Aorta (tissue), 5 donors: ENCODE measurements at regions of chr1 and their contacts with region 1.

Region 1: DNA sequence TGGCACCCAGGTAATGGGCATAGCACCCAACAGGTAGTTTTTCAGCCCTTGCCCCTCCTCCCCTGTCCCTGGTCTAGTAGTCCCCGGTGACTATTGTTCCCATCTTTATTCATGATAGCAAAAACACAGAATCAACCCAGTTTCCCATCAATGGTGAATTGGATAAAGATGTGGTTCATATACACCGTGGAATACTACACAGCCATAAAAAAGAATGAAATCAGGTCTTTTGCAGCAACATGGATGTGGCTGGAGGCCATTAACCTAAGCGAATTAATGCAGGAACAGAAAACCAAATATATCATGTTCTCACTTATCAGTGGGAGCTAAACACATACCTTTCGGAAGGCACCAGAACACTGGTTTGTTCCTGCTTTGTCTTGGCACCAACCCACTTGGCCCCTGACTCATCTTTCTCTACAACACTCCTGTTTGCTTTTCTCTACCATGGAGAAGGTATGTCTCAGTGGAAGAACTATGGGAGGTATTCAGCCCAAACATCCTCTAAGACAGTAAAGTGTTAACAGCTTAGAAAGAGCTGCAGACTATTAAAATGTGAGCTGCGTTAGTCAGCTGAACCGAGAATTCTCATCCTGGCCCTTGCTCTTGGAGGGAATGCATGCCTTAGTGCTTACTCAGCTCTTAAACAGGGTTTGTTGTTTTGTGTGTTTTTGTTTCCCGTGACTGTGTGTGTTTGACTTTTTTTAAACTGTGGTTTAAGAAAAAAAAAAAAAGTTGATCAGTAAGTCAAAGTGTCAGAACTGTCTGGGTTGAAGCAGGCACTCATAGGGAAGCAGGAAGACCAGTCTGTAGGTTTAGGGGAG is 203.0 kb downstream of the TOMM20 start:
- DNase-seq: no peak
- ATAC-seq: peak; percentile 86
- H3K4me3 ChIP-seq: no peak overlapping the region
- H3K27ac ChIP-seq: peak overlapping the region; percentile 48 to 78
- H3K4me1 ChIP-seq: peaks cover 0 to 2% of the 10 kb centered on the region in 2 donors
- H3K27me3 ChIP-seq: no peaks in the 10 kb centered on the region

Region 2: DNA sequence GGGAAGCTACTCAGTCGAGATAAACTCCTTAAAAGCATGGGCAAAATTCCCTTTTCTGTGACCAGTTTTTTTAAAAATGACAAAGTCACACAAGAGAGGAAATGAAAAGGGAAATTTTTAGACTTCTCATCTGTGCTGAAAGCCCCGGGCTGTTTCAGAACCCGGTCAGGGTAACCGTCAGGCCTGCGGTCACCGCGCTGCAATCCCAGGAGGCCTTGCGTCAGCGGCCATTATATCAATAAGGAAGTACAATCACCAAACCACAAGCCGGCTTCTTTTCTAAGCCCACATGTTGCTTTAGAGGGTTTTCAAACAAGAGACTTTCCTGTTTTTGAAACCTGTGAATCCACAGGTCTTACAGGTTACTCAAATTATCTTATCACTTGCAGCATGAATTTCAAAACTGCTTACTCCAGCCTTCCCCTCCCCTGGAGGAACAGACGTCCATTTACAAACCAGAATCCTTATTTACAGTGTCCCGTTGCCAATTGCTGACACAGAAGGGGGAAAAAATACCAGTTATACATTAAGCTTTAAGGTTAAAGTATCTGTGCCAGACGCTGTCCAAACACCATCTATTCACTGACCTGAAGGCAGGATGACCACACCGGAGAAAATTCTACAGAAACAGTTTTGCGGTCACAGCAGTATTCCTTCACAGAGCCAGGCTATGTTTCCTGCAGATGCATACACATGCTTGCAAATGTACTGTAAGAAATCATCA is 37.7 kb after region 1 on chr1:
- intact Hi-C with region 1: loop called in 1 of 2 experiments (anchors 5 kb)
- DNase-seq: peak; percentile 90 to 94
- ATAC-seq: peak; percentile 72
- H3K4me3 ChIP-seq: no peak overlapping the region
- H3K27ac ChIP-seq: peak overlapping the region; percentile 55 to 67
- H3K4me1 ChIP-seq: peaks cover 3 to 5% of the 10 kb centered on the region in 2 donors
- H3K27me3 ChIP-seq: no peaks in the 10 kb centered on the region

Region 3: GRCh38 chr1:235067263-235068172 is 141.9 kb after region 1 on chr1:
- intact Hi-C with region 1: loop called in 1 of 2 experiments (anchors 5 kb)
- DNase-seq: peak; percentile 92 to 95
- ATAC-seq: peak; percentile 82
- H3K4me3 ChIP-seq: no peak overlapping the region
- H3K27ac ChIP-seq: peak overlapping the region; percentile 16 to 89
- H3K4me1 ChIP-seq: peaks cover 0 to 2% of the 10 kb centered on the region in 2 donors
- H3K27me3 ChIP-seq: no peaks in the 10 kb centered on the region